T-cell (primary cell): ENCODE measurements at regions of chr16 and their contacts with region 1.

Region 1: GRCh38 chr16:82136956-82137821 is 32.8 kb downstream of the MPHOSPH6 start:
- DNase-seq: no peak
- ATAC-seq: no peak
- H3K4me3 ChIP-seq: no peak overlapping the region
- H3K4me3 Mint-ChIP-seq: no peak overlapping the region
- H3K27ac ChIP-seq: no peak overlapping the region
- H3K27ac Mint-ChIP-seq: no peak overlapping the region
- H3K4me1 ChIP-seq: peaks cover 6 to 11% of the 10 kb centered on the region in 2 experiments
- H3K4me1 Mint-ChIP-seq: peaks cover 25 to 31% (median 26%) of the 10 kb centered on the region in 3 donors
- H3K27me3 ChIP-seq: no peaks in the 10 kb centered on the region
- H3K27me3 Mint-ChIP-seq: no peaks in the 10 kb centered on the region

Region 2: GRCh38 chr16:82119405-82119804 is 17.8 kb before region 1 on chr16:
- CTCF ChIA-PET with region 1: no interaction called
- POLR2A ChIA-PET with region 1: interaction called in 1 of 2 experiments, 11 read pairs
- DNase-seq: no peak
- ATAC-seq: no peak
- H3K4me3 ChIP-seq: no peak overlapping the region
- H3K4me3 Mint-ChIP-seq: no peak overlapping the region
- H3K27ac ChIP-seq: no peak overlapping the region
- H3K27ac Mint-ChIP-seq: no peak overlapping the region
- H3K4me1 ChIP-seq: no peaks in the 10 kb centered on the region
- H3K4me1 Mint-ChIP-seq: no peaks in the 10 kb centered on the region
- H3K27me3 ChIP-seq: no peaks in the 10 kb centered on the region
- H3K27me3 Mint-ChIP-seq: no peaks in the 10 kb centered on the region